Activated T-helper 1 cell treated with anti-CD3 and anti-CD28 coated beads, Interleukin-12 subunit alpha, Interleukin-12 subunit beta, Interleukin-2, Interleukin-4 antibody, amounts not matched to agents 30 ng/mL and 10 ng/mL and 1 ng/mL, durations not matched to agents 14 hours and 24 hours and 36 hours (primary cell): ENCODE measurements at regions of chr5 and their contacts with region 1.

Region 1: DNA sequence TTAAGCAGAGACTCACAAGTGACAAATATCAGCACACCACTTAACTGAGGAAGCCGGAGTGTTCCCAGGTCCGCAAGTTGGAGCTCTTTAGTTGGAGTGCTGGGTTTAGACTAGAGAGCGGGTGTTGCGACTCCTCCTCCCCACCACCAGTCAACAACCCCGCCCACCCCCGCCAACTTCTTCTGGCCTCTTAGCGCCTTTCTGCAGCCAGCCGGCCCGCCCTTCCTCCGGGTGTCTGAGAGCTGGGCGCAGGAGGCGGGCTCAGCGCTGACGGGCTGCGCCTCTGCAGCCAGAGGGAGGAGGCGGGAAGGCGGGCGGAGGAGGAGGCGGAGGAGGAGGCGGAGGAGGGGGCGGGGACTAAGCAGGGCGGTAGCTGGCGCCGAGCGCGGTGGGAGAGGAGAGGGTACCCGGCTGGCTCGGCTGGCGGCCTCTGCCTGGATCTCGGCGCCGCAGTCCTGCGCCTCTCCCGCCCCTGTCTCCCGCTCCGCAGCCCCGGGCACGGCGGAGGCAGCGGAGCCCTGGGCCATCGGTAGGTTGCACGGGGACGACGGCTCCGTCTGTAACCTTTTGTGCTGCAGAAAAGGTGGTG is at the start of gene MACIR:
- DNase-seq: peak; percentile 92
- H3K4me3 Mint-ChIP-seq: peak within 1 kb of the TSS; percentile 94
- H3K27ac Mint-ChIP-seq: peak within 1 kb of the TSS; percentile 75
- H3K4me1 Mint-ChIP-seq: peaks cover 39% of the 10 kb centered on the region
- H3K27me3 Mint-ChIP-seq: peaks cover 19% of the 10 kb centered on the region
- total RNA-seq, gene MACIR: 11.9 and 12.3 TPM in 2 replicates

Region 2: GRCh38 chr5:102755686-102756371 is 502.6 kb before region 1 on chr5:
- intact Hi-C with region 1: loop called (anchors 5 kb)
- DNase-seq: peak; percentile 60
- H3K4me3 Mint-ChIP-seq: peak overlapping the region; percentile 96
- H3K27ac Mint-ChIP-seq: peak overlapping the region; percentile 96
- H3K4me1 Mint-ChIP-seq: peaks cover 58% of the 10 kb centered on the region
- H3K27me3 Mint-ChIP-seq: peaks cover 6% of the 10 kb centered on the region

Region 3: GRCh38 chr5:103119765-103120606 is 138.5 kb before region 1 on chr5 and contains the starts of genes GIN1 and PPIP5K2:
- intact Hi-C with region 1: loop called (anchors 1 kb)
- DNase-seq: peak; percentile 96
- H3K4me3 Mint-ChIP-seq: peak within 1 kb of the TSS; percentile 93
- H3K27ac Mint-ChIP-seq: peak within 1 kb of the TSS; percentile 96
- H3K4me1 Mint-ChIP-seq: peaks cover 41% of the 10 kb centered on the region
- H3K27me3 Mint-ChIP-seq: no peaks in the 10 kb centered on the region
- total RNA-seq, gene GIN1: 8.6 and 9.3 TPM in 2 replicates
- total RNA-seq, gene PPIP5K2: 47.6 and 52.7 TPM in 2 replicates

Region 4: DNA sequence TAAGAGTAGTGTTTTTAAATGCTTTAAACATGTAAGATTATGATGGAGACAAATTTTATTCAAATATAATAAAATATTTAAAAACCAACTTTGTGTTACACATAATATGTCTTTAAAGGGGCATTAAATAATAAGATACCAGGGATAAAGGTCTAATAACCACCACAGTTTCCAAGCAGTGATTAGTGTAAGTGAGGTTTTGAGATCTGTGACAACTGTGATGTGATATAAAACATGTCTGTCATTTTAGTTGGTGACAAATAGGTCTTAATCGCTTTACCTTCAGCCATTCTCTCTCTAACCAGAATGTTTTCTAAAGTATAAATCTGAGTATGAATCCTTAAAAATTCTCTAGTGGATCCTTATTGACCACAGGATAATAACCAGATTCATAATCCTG is 110.2 kb before region 1 on chr5:
- intact Hi-C with region 1: no loop called
- DNase-seq: no peak
- H3K4me3 Mint-ChIP-seq: no peak overlapping the region
- H3K27ac Mint-ChIP-seq: no peak overlapping the region
- H3K4me1 Mint-ChIP-seq: no peaks in the 10 kb centered on the region
- H3K27me3 Mint-ChIP-seq: no peaks in the 10 kb centered on the region

Region 5: DNA sequence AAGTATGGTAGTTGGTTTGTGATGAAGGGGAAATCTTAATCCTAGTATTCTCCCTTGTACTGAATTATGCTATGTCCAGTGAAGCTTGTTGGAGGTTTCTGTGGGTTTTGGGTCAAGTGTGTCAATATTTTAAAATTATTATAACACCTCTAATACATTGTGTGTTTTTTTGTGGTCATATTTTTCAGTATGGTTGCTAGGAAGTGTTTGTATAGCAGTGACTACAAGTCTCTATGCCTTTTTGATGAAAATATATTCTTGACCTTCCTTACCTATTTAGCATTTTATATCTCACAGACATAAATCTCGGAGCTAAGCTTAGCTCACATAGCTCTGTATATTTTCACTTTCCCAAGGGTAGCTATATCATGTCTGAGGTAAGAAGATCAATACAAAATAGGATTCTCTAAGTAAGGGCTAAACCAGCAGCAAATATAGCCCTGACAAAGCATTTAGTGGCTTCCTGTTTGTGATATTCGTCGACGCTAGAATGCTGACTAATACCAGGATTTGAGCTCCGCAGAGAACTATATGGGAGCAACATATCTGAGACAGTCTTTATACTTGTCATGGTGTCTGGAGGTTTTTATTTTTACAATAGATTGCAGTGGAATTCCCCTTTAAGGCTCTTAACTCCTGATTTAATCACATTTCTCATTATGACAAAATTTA is 82.4 kb after region 1 on chr5:
- intact Hi-C with region 1: loop called (anchors 1 kb)
- DNase-seq: no peak
- H3K4me3 Mint-ChIP-seq: no peak overlapping the region
- H3K27ac Mint-ChIP-seq: no peak overlapping the region
- H3K4me1 Mint-ChIP-seq: peaks cover 13% of the 10 kb centered on the region
- H3K27me3 Mint-ChIP-seq: peaks cover 11% of the 10 kb centered on the region

Region 6: GRCh38 chr5:103356350-103357091 is 98.1 kb after region 1 on chr5:
- intact Hi-C with region 1: loop called (anchors 5 kb)
- DNase-seq: no peak
- H3K4me3 Mint-ChIP-seq: no peak overlapping the region
- H3K27ac Mint-ChIP-seq: peak overlapping the region; percentile 58
- H3K4me1 Mint-ChIP-seq: peaks cover 15% of the 10 kb centered on the region
- H3K27me3 Mint-ChIP-seq: peaks cover 4% of the 10 kb centered on the region

Region 7: DNA sequence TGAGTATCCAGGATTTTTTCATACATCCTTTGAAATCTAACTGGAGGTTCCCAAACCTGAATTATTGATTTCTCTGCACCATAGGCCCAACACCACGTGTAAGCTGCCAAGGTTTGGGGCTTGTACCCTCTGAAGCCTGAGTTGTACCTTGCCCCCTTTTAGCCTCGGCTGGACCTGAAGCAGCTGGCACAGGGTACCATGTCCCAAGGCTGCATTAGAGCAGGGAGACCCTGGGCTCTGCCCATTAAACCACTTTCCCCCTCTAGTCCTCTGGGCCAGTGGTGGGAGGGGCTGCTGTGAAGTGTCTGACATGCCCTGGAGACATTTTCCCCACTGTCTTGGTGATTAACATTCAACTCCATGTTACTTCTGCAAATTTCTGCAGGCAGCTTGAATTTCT is 837.1 kb after region 1 on chr5:
- intact Hi-C with region 1: no loop called
- DNase-seq: no peak
- H3K4me3 Mint-ChIP-seq: no peak overlapping the region
- H3K27ac Mint-ChIP-seq: no peak overlapping the region
- H3K4me1 Mint-ChIP-seq: no peaks in the 10 kb centered on the region
- H3K27me3 Mint-ChIP-seq: no peaks in the 10 kb centered on the region